Endothelial cell of umbilical vein (primary cell): ENCODE measurements at regions of chrX and their contacts with region 1.

Region 1: GRCh38 chrX:88613338-88613737 is 133.7 kb upstream of the CPXCR1 start:
- DNase-seq: peak; percentile 43
- H3K4me3 ChIP-seq: no peak overlapping the region
- H3K27ac ChIP-seq: no peak overlapping the region
- H3K4me1 ChIP-seq: no peaks in the 10 kb centered on the region
- H3K27me3 ChIP-seq: no peaks in the 10 kb centered on the region
- CTCF ChIP-seq: peak in 1 of 2 donors; percentile 24
- POLR2A ChIP-seq: no peak

Region 2: GRCh38 chrX:87583679-87584078 is 1029.7 kb before region 1 on chrX:
- CTCF ChIA-PET with region 1: no interaction called
- POLR2A ChIA-PET with region 1: no interaction called
- dilution Hi-C with region 1: no loop called
- intact Hi-C with region 1: loop called (anchors 5 kb)
- DNase-seq: peak; percentile 33
- H3K4me3 ChIP-seq: no peak overlapping the region
- H3K27ac ChIP-seq: no peak overlapping the region
- H3K4me1 ChIP-seq: no peaks in the 10 kb centered on the region
- H3K27me3 ChIP-seq: no peaks in the 10 kb centered on the region
- CTCF ChIP-seq: peak; percentile 42 to 47
- POLR2A ChIP-seq: no peak

Region 3: DNA sequence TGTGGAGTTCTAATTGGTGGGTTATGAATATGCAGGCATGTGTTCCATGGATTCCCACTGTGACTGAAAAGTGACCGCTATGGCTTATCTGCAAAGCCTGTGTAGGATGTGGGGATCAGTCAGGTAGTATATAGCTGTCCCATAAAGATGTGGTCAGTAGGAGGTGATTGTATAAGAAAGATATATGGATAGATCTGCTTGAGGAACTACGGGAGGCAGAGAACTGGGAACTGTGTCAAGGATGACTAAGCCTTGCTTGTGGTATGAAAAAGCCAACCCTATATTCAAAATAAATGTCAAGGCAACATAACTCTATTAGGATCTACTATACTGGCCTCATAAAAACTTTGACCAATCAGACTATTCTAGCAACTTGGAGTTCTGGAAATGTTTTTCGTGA is 910.5 kb before region 1 on chrX:
- CTCF ChIA-PET with region 1: no interaction called
- POLR2A ChIA-PET with region 1: no interaction called
- dilution Hi-C with region 1: no loop called
- intact Hi-C with region 1: no loop called
- DNase-seq: no peak
- H3K4me3 ChIP-seq: no peak overlapping the region
- H3K27ac ChIP-seq: no peak overlapping the region
- H3K4me1 ChIP-seq: no peaks in the 10 kb centered on the region
- H3K27me3 ChIP-seq: no peaks in the 10 kb centered on the region
- CTCF ChIP-seq: no peak
- POLR2A ChIP-seq: no peak

Region 4: GRCh38 chrX:88135735-88136134 is 477.6 kb before region 1 on chrX:
- CTCF ChIA-PET with region 1: no interaction called
- POLR2A ChIA-PET with region 1: no interaction called
- dilution Hi-C with region 1: no loop called
- intact Hi-C with region 1: loop called (anchors 2 kb)
- DNase-seq: peak; percentile 1
- H3K4me3 ChIP-seq: no peak overlapping the region
- H3K27ac ChIP-seq: no peak overlapping the region
- H3K4me1 ChIP-seq: no peaks in the 10 kb centered on the region
- H3K27me3 ChIP-seq: no peaks in the 10 kb centered on the region
- CTCF ChIP-seq: no peak
- POLR2A ChIP-seq: no peak

Region 5: GRCh38 chrX:88425739-88426138 is 187.6 kb before region 1 on chrX:
- CTCF ChIA-PET with region 1: no interaction called
- POLR2A ChIA-PET with region 1: no interaction called
- dilution Hi-C with region 1: no loop called
- intact Hi-C with region 1: loop called (anchors 10 kb)
- DNase-seq: peak; percentile 0
- H3K4me3 ChIP-seq: no peak overlapping the region
- H3K27ac ChIP-seq: no peak overlapping the region
- H3K4me1 ChIP-seq: no peaks in the 10 kb centered on the region
- H3K27me3 ChIP-seq: no peaks in the 10 kb centered on the region
- CTCF ChIP-seq: no peak
- POLR2A ChIP-seq: no peak

Region 6: GRCh38 chrX:88603237-88603636 is 10.1 kb before region 1 on chrX:
- CTCF ChIA-PET with region 1: no interaction called
- POLR2A ChIA-PET with region 1: no interaction called
- dilution Hi-C with region 1: no loop called
- intact Hi-C with region 1: no loop called
- DNase-seq: no peak
- H3K4me3 ChIP-seq: no peak overlapping the region
- H3K27ac ChIP-seq: no peak overlapping the region
- H3K4me1 ChIP-seq: peaks cover 2% of the 10 kb centered on the region
- H3K27me3 ChIP-seq: no peaks in the 10 kb centered on the region
- CTCF ChIP-seq: no peak
- POLR2A ChIP-seq: no peak

Region 7: GRCh38 chrX:88660836-88661235 is 47.5 kb after region 1 on chrX:
- CTCF ChIA-PET with region 1: no interaction called
- POLR2A ChIA-PET with region 1: no interaction called
- dilution Hi-C with region 1: no loop called
- intact Hi-C with region 1: no loop called
- DNase-seq: no peak
- H3K4me3 ChIP-seq: no peak overlapping the region
- H3K27ac ChIP-seq: no peak overlapping the region
- H3K4me1 ChIP-seq: no peaks in the 10 kb centered on the region
- H3K27me3 ChIP-seq: no peaks in the 10 kb centered on the region
- CTCF ChIP-seq: no peak
- POLR2A ChIP-seq: no peak